Sigmoid colon (tissue), 7 donors: ENCODE measurements at regions of chr2 and their contacts with region 1.

Region 1: GRCh38 chr2:206693399-206694137 is 24.6 kb downstream of the DYTN start:
- DNase-seq: no peak
- H3K4me3 ChIP-seq: no peak overlapping the region
- H3K27ac ChIP-seq: no peak overlapping the region
- H3K4me1 ChIP-seq: no peaks in the 10 kb centered on the region
- H3K27me3 ChIP-seq: no peaks in the 10 kb centered on the region
- CTCF ChIP-seq: peak in 3 of 4 experiments; percentile 54 to 65 (median 54)
- EP300 ChIP-seq: no peak
- POLR2A ChIP-seq: no peak

Region 2: DNA sequence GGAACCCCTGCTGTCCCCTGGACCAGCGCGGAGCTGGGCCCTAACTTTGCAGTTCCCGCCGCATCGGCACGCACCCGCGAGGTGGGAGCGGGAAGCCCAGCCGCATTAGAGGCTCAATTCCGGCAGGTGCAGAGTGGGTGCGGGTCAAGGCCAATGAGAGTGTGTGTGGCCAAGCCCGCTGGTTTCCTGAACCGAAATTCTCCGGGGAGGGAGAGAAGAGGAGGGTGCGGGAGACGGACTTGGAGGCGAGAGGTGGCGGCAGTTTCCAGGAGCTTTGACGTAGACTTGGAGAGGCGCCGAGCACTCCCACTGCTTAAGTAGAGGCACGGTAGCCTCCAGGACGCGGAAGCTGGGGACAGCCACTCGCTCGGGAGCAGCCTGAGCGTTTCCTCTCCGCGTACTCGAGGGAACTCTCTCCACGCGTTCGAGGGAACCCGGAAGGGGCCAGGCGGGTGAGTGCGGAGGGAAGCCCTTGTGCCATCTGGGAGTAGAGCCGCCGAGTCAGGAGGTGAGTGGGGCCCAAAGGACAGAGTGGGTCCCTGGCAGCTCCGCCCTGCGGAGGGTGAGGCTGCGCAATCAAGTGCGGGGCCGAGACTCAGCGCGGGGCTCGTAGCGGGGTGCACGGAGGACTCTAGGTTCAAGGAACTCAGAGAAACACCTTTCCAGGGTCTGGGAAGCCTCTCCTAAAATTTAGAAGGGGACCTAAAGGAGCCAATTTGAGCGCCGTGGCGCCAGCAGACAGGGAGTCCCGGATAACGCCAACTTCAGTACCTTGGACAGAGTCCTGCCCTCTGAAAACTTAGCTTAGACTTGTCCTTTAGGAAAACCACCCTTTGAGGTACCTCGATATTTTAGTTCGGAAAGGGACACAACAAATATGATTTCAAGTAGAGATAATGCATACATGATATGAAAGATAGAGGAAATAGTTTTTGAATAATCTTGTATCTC is 51.2 kb before region 1 on chr2 and contains the start of gene FAM237A:
- intact Hi-C with region 1: no loop called
- DNase-seq: no peak
- H3K4me3 ChIP-seq: no peak within 1 kb of the TSS
- H3K27ac ChIP-seq: no peak within 1 kb of the TSS
- H3K4me1 ChIP-seq: no peaks in the 10 kb centered on the region
- H3K27me3 ChIP-seq: peaks cover 7 to 30% (median 16%) of the 10 kb centered on the region in 3 donors
- CTCF ChIP-seq: no peak
- EP300 ChIP-seq: no peak
- POLR2A ChIP-seq: no peak
- total RNA-seq, gene FAM237A: not detected

Region 3: DNA sequence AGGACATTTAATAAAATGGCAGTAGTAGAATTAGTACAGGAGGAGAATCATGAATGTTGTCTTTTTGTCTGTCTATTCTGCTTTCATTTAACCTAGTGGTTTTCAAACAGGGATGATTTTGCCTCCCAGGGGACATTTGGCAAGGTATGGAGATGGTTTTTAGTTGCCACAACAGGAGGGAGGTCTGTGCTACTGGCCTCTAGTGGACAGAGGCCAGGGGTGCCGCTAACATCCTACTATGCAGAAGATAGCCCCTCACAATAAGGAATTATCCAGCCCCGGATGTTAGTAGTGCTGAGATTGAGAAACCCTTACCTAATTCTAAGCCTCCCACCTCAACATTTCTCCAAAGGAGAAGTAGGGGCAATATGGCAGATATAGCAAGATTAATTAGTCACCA is 90.2 kb after region 1 on chr2:
- intact Hi-C with region 1: loop called (anchors 5 kb)
- DNase-seq: no peak
- H3K4me3 ChIP-seq: no peak overlapping the region
- H3K27ac ChIP-seq: no peak overlapping the region
- H3K4me1 ChIP-seq: no peaks in the 10 kb centered on the region
- H3K27me3 ChIP-seq: no peaks in the 10 kb centered on the region
- CTCF ChIP-seq: no peak
- EP300 ChIP-seq: no peak
- POLR2A ChIP-seq: no peak

Region 4: GRCh38 chr2:206981739-206982340 is 288.3 kb after region 1 on chr2:
- intact Hi-C with region 1: loop called (anchors 10 kb)
- DNase-seq: peak; percentile 88
- H3K4me3 ChIP-seq: no peak overlapping the region
- H3K27ac ChIP-seq: peak overlapping the region in 1 of 4 donors; percentile 32
- H3K4me1 ChIP-seq: peaks cover 0 to 32% (median 18%) of the 10 kb centered on the region in 4 donors
- H3K27me3 ChIP-seq: no peaks in the 10 kb centered on the region
- CTCF ChIP-seq: peak; percentile 60 to 85 (median 82)
- EP300 ChIP-seq: peak in 1 of 4 donors; percentile 9
- POLR2A ChIP-seq: no peak

Region 5: DNA sequence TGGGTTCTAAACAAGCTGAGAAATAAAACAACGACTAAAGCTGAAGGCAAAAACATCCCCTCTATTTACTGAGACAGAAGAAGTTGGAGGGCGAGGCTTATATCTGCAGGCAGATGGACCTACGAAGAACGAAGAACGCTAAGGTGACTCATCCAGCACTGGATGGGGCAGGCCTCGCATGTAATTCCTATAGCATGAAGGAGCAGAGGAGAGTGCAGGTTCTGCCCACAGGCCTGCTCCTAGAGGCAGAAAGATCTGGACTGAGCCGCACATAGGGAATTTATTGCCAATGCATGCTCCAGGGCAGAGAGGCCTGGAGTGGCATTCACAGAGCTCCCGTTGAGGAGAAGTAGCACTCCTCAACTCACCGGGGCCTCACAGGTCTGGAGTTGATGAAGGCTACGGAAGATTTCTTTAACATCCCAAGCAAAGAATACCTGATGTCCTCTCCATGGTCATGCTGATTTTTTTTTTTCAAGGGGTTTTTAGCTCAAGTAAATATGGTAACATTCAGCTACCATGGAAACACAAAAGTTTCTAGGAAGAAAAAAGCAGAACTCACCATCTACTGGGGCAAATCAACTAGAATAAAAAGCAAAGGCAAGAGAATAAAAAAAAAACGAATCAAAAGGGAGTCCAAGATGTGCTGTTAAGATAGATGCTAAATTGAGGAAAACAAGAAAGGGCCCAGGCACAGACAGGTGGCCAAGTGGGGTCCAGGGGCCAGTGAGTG is 942.1 kb after region 1 on chr2:
- intact Hi-C with region 1: no loop called
- DNase-seq: no peak
- H3K4me3 ChIP-seq: no peak overlapping the region
- H3K27ac ChIP-seq: no peak overlapping the region
- H3K4me1 ChIP-seq: no peaks in the 10 kb centered on the region
- H3K27me3 ChIP-seq: no peaks in the 10 kb centered on the region
- CTCF ChIP-seq: no peak
- EP300 ChIP-seq: no peak
- POLR2A ChIP-seq: no peak